Dendritic cell treated with granulocyte-macrophage colony-stimulating factor and Interleukin-4, amounts not matched to agents 40 ng/mL and 50 ng/mL, for 4 days (primary cell): ENCODE measurements at regions of chr12 and their contacts with region 1.

Region 1: GRCh38 chr12:78977304-78977867 is 112.8 kb downstream of the SYT1 start:
- H3K4me3 Mint-ChIP-seq: peak overlapping the region; percentile 64
- H3K27ac Mint-ChIP-seq: peak overlapping the region; percentile 68
- H3K4me1 Mint-ChIP-seq: peaks cover 10% of the 10 kb centered on the region
- H3K27me3 Mint-ChIP-seq: no peaks in the 10 kb centered on the region

Region 2: GRCh38 chr12:78418919-78419318 is 558.5 kb before region 1 on chr12:
- intact Hi-C with region 1: no loop called
- H3K4me3 Mint-ChIP-seq: no peak overlapping the region
- H3K27ac Mint-ChIP-seq: no peak overlapping the region
- H3K4me1 Mint-ChIP-seq: peaks cover 15% of the 10 kb centered on the region
- H3K27me3 Mint-ChIP-seq: no peaks in the 10 kb centered on the region

Region 3: DNA sequence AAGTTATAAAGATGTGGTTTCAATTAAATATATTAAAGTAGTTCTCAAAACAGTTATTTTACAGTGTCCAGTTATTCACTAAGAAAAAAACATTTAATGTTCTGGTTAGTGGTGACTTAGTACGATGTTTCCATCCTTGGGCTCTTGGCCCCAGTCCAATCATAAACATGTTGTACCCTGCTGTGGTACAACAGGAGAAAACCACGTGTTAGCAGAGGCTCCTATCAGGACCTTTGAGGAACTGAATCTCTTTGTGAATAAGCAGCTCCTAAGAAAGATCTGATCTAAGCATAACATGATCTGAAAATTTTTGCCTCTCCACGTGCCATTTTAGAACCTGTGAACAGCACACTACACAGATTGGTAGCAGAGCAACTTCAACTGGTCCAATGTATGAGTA is 121.1 kb after region 1 on chr12:
- intact Hi-C with region 1: loop called (anchors 5 kb)
- H3K4me3 Mint-ChIP-seq: no peak overlapping the region
- H3K27ac Mint-ChIP-seq: no peak overlapping the region
- H3K4me1 Mint-ChIP-seq: peaks cover 6% of the 10 kb centered on the region
- H3K27me3 Mint-ChIP-seq: no peaks in the 10 kb centered on the region